ENCODE measurements at regions of chr14 and their contacts with region 1.

Region 1: GRCh38 chr14:70045844-70046535 is 142.8 kb downstream of the SLC8A3 start:
- DNase-seq: peak; percentile 56
- H3K4me3 ChIP-seq: no peak overlapping the region
- H3K27ac ChIP-seq: no peak overlapping the region
- H3K4me1 ChIP-seq: no peaks in the 10 kb centered on the region
- H3K27me3 ChIP-seq: peaks cover 0 to 3% of the 10 kb centered on the region in 2 experiments
- CTCF ChIP-seq: peak; percentile 56 to 91
- POLR2A ChIP-seq: no peak

Region 2: DNA sequence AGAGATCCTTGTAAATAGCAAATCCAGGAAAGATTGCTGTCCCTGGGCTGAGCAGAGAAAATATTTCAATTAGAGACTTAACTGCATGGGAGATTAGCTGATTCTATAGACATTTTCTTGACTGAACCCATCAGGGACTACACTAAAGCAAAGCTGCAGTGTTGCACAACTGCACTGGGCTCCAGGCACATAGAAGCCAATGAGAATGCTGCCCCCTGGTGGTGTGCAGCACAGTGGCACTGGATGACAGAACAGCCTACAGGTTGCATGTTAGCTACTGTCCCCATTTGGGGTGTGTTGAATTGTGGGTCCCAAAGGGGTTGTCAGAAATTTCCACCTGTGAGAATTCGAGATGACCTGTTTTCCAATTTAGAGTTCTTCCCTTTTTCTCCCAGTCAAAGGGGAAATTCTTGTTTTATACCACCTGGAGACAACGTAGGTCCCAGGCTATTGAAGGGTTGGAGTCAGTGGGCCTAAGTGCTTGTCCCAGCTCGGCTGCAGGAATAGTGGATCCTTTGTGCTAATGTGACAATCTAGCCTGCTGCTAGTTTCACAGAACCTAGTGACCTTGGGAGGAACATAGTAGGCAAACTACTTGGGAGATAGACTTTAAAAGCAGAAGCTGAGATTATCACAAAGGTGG is 28.1 kb after region 1 on chr14:
- CTCF ChIA-PET with region 1: interaction called, 20 read pairs
- POLR2A ChIA-PET with region 1: no interaction called
- dilution Hi-C with region 1: no loop called
- intact Hi-C with region 1: loop called (anchors 1 kb)
- DNase-seq: peak; percentile 35
- H3K4me3 ChIP-seq: no peak overlapping the region
- H3K27ac ChIP-seq: no peak overlapping the region
- H3K4me1 ChIP-seq: no peaks in the 10 kb centered on the region
- H3K27me3 ChIP-seq: no peaks in the 10 kb centered on the region
- CTCF ChIP-seq: peak; percentile 71 to 83
- POLR2A ChIP-seq: no peak

Region 3: DNA sequence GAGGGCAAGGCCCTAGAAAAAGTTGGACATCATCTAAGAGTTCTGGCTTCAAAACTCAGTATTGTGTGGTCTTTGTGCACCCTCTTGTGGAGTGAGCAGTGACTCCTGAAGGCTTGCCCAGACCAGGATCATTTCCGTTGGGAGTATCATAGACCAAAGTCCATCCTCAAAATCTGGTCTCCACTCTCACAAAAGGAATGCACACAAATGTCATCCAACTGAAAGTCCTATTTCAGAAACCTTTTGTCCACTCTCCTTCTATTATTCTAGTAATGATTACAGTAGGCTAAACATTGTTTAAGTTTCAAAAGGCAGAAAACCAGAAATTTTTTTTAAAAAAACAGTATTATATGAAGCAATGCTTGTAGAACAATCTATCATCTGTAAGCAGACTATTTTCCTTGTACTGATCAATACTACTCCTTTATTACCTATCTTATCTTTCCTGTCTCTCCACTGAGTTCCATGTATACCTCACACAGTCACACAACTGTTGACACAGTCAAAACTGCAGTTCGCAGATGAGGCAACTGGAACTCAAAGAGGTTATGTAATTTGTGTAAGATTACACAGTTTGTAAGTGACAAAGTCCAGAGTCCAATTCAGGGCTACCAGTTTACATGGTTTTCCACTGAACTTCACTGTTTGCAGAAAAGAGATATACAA is 272.1 kb after region 1 on chr14:
- CTCF ChIA-PET with region 1: interaction called, 4 read pairs
- POLR2A ChIA-PET with region 1: no interaction called
- dilution Hi-C with region 1: no loop called
- intact Hi-C with region 1: loop called (anchors 1 kb)
- DNase-seq: peak; percentile 35
- H3K4me3 ChIP-seq: no peak overlapping the region
- H3K27ac ChIP-seq: no peak overlapping the region
- H3K4me1 ChIP-seq: no peaks in the 10 kb centered on the region
- H3K27me3 ChIP-seq: peaks cover 0 to 2% of the 10 kb centered on the region in 2 experiments
- CTCF ChIP-seq: peak; percentile 15 to 44
- POLR2A ChIP-seq: no peak

Region 4: DNA sequence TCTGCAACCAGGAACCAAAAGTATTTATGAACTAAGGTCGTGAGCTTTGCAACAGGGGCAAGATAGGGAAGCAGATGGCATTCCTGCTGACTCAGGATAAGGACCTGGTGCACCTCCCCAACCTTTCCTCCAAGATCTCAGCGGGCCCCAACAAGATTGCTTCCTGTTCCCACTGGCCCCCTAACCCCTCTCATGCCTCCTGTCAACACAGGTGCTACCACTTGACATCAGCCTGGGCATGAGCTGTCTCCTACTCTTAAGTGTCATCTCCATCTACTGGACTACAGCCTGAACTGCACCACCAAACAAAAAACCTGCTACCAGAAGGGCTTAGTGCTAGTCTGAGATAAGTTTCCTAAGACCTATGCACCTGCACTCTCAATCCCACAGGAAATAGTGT is 521.8 kb after region 1 on chr14:
- CTCF ChIA-PET with region 1: interaction called, 14 read pairs
- POLR2A ChIA-PET with region 1: no interaction called
- dilution Hi-C with region 1: no loop called
- intact Hi-C with region 1: loop called (anchors 1 kb)
- DNase-seq: peak; percentile 51
- H3K4me3 ChIP-seq: no peak overlapping the region
- H3K27ac ChIP-seq: no peak overlapping the region
- H3K4me1 ChIP-seq: no peaks in the 10 kb centered on the region
- H3K27me3 ChIP-seq: no peaks in the 10 kb centered on the region
- CTCF ChIP-seq: peak; percentile 56 to 65
- POLR2A ChIP-seq: no peak

Region 5: DNA sequence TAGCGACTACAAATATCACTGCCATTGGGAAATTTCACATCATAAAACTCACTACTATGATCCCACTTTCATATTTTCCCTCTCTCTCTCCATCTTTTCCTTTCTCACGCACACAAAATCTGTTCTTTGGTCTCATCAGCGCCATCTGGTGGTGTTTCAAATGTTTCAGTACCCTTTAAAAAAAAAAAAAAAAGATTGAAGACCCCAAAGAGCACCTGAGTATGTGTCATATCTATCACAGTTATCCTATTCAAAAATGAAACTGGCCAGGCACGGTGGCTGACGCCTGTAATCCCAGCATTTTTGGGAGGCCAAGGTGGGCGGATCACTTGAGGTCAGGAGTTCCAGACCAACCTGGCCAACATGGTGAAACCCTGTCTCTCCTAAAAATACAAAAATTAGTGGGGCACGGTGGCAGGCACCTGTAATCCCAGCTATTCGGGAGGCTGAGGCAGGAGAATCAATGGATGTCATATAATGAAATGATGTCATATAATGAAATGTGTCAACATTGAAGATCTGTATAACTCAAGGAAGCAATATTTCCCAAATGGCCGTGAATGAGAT is 668.1 kb after region 1 on chr14:
- CTCF ChIA-PET with region 1: interaction called, 7 read pairs
- POLR2A ChIA-PET with region 1: no interaction called
- dilution Hi-C with region 1: no loop called
- intact Hi-C with region 1: loop called (anchors 1 kb)
- DNase-seq: peak; percentile 67
- H3K4me3 ChIP-seq: no peak overlapping the region
- H3K27ac ChIP-seq: no peak overlapping the region
- H3K4me1 ChIP-seq: no peaks in the 10 kb centered on the region
- H3K27me3 ChIP-seq: peaks cover 3 to 14% of the 10 kb centered on the region in 2 experiments
- CTCF ChIP-seq: peak; percentile 33 to 46
- POLR2A ChIP-seq: no peak

Region 6: GRCh38 chr14:70816525-70816924 is 770.5 kb after region 1 on chr14:
- CTCF ChIA-PET with region 1: no interaction called
- POLR2A ChIA-PET with region 1: no interaction called
- dilution Hi-C with region 1: no loop called
- intact Hi-C with region 1: loop called (anchors 2 kb)
- DNase-seq: no peak
- H3K4me3 ChIP-seq: no peak overlapping the region
- H3K27ac ChIP-seq: no peak overlapping the region
- H3K4me1 ChIP-seq: no peaks in the 10 kb centered on the region
- H3K27me3 ChIP-seq: peaks cover 28 to 33% of the 10 kb centered on the region in 2 experiments
- CTCF ChIP-seq: no peak
- POLR2A ChIP-seq: no peak